Vagina (tissue), 2 donors: ENCODE measurements at regions of chr3 and their contacts with region 1.

Region 1: DNA sequence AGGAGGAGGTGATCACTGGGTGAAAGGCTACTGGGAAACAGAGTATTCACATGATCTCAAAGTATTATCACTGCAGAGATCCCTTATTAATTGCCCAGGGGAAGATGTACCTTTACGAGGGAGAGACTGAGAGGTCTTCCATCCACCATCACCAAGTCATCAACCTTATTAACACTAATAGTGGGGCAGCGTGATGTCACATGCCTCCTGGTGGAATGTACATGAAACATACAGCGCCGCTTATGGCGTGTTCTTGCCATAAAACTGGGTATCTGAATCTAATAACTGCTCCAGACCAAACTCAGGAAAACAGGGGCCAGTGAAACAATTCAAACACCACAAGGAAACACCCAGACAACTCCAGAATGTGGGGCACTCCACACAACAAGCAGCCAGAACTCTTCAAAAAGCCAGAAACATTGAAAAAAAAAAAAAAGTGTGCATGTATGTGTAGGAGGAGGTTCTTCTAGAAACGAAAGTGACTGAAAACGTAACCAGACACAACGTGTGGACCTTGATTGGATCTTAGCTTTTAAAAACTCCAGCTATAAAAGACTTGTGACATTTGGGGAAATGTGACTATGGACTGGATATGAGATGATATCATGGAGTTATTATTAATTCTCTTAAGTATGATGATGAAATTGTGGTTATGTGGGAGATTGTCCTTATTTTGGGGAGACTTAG is 4.6 kb downstream of the STIMATE start:
- DNase-seq: peak in 1 of 2 donors; percentile 25
- H3K4me3 ChIP-seq: peak overlapping the region; percentile 8 to 22
- H3K27ac ChIP-seq: peak overlapping the region; percentile 76
- H3K4me1 ChIP-seq: peaks cover 68% of the 10 kb centered on the region
- H3K27me3 ChIP-seq: no peaks in the 10 kb centered on the region
- CTCF ChIP-seq: no peak
- POLR2A ChIP-seq: no peak

Region 2: DNA sequence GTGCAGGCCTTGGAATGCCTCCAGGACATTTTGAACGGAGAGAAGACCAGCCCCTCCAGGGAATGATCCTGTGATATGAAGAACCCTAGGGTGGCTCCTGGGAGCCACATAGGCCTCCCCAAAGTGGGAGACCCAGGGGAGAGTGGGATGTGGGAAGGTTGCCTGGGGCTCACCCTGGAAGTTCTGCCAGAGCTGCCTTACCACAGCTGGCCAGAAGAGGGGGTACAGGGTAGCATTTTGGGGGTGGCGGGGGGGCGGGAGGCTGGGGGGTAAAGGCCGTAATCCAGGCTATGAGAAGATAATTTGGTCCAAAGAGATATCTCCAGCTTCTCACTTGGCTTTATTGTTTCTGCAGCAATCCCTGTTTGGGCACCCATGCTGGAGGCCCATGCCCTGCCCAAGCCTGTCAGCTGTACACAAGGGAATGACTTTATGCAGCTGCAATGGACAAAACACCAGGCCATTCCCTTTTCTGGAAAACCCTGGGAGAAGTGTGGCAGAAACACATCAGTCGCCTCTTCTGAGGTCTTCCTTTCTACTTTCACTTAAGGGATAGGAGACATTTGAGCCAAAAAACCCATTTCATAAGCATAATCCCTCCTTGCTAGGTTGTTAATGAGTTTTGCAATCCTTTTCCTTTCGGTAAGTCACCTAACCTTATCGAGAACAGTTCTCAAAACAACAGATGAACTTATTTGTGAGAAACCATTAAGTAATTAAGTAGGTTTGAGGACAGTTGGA is 46.9 kb before region 1 on chr3:
- intact Hi-C with region 1: loop called (anchors 5 kb)
- DNase-seq: no peak
- H3K4me3 ChIP-seq: no peak overlapping the region
- H3K27ac ChIP-seq: peak overlapping the region; percentile 90
- H3K4me1 ChIP-seq: peaks cover 36% of the 10 kb centered on the region
- H3K27me3 ChIP-seq: no peaks in the 10 kb centered on the region
- CTCF ChIP-seq: no peak
- POLR2A ChIP-seq: no peak

Region 3: GRCh38 chr3:53089511-53089910 is 196.7 kb after region 1 on chr3:
- intact Hi-C with region 1: no loop called
- DNase-seq: no peak
- H3K4me3 ChIP-seq: no peak overlapping the region
- H3K27ac ChIP-seq: no peak overlapping the region
- H3K4me1 ChIP-seq: peaks cover 12% of the 10 kb centered on the region
- H3K27me3 ChIP-seq: no peaks in the 10 kb centered on the region
- CTCF ChIP-seq: no peak
- POLR2A ChIP-seq: no peak